ENCODE measurements at regions of chr2 and their contacts with region 1.

Region 1: GRCh38 chr2:27050281-27050995 is 1.0 kb upstream of the AGBL5 start:
- DNase-seq: peak; percentile 95
- ATAC-seq: peak; percentile 73
- H3K4me3 Mint-ChIP-seq: peak overlapping the region; percentile 90
- H3K27ac Mint-ChIP-seq: peak overlapping the region; percentile 98
- H3K4me1 Mint-ChIP-seq: peaks cover 18% of the 10 kb centered on the region
- H3K27me3 Mint-ChIP-seq: peaks cover 4% of the 10 kb centered on the region

Region 2: GRCh38 chr2:26959331-26959730 is 91.1 kb before region 1 on chr2:
- CTCF ChIA-PET with region 1: interaction called, 15 read pairs
- POLR2A ChIA-PET with region 1: no interaction called
- intact Hi-C with region 1: no loop called
- DNase-seq: no peak
- ATAC-seq: no peak
- H3K4me3 Mint-ChIP-seq: no peak overlapping the region
- H3K27ac Mint-ChIP-seq: no peak overlapping the region
- H3K4me1 Mint-ChIP-seq: no peaks in the 10 kb centered on the region
- H3K27me3 Mint-ChIP-seq: peaks cover 27% of the 10 kb centered on the region

Region 3: GRCh38 chr2:26982102-26982742 is 68.2 kb before region 1 on chr2:
- CTCF ChIA-PET with region 1: no interaction called
- POLR2A ChIA-PET with region 1: no interaction called
- intact Hi-C with region 1: no loop called
- DNase-seq: peak; percentile 42
- ATAC-seq: peak; percentile 57
- H3K4me3 Mint-ChIP-seq: no peak overlapping the region
- H3K27ac Mint-ChIP-seq: no peak overlapping the region
- H3K4me1 Mint-ChIP-seq: no peaks in the 10 kb centered on the region
- H3K27me3 Mint-ChIP-seq: no peaks in the 10 kb centered on the region

Region 4: DNA sequence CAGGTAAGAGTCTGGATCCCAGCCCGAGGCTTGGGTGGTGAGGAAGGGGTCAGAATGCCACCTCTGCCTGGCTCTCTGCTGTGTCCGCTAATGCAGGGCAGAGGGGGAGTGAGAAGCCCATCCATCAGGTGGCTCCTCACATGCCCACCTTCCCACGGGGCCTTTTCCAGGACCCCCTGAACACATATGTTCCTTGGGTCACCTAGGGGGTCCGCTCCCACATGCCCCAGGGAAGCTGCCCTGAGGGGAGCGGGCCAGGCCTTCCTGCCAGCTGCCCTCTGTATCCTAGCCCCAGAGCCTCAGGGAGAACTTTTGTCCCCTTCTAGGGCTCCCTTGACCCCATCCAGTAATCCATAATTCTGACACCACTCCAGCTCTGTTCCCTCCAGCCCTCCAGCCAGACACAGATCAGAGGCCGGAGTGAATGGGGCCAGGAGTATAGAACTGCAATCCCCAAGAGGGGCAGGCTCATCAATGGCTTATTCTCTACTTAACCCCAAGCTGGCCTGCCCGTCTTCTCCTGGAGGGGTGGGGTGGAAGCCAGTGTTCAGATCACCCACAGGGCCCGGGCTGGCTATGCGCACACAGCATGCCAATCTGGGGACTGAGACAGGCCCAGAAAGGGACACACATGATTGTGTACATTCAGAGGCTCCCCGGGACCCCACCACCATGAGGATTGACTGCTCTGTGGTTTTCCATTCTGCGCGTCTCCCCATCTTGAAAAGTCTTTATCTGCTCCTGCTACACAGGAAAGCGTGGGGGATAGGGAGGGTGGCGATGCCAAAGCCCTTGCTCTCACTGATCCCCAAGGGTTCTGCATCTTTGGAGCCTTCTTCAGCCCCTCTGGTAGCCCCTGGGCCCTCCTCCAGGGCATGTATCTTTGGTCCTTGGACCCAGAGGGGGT is 29.0 kb after region 1 on chr2:
- CTCF ChIA-PET with region 1: interaction called, 30 read pairs
- POLR2A ChIA-PET with region 1: interaction called, 6 read pairs
- intact Hi-C with region 1: loop called (anchors 1 kb)
- DNase-seq: no peak
- ATAC-seq: no peak
- H3K4me3 Mint-ChIP-seq: no peak overlapping the region
- H3K27ac Mint-ChIP-seq: peak overlapping the region; percentile 83
- H3K4me1 Mint-ChIP-seq: peaks cover 43% of the 10 kb centered on the region
- H3K27me3 Mint-ChIP-seq: no peaks in the 10 kb centered on the region

Region 5: DNA sequence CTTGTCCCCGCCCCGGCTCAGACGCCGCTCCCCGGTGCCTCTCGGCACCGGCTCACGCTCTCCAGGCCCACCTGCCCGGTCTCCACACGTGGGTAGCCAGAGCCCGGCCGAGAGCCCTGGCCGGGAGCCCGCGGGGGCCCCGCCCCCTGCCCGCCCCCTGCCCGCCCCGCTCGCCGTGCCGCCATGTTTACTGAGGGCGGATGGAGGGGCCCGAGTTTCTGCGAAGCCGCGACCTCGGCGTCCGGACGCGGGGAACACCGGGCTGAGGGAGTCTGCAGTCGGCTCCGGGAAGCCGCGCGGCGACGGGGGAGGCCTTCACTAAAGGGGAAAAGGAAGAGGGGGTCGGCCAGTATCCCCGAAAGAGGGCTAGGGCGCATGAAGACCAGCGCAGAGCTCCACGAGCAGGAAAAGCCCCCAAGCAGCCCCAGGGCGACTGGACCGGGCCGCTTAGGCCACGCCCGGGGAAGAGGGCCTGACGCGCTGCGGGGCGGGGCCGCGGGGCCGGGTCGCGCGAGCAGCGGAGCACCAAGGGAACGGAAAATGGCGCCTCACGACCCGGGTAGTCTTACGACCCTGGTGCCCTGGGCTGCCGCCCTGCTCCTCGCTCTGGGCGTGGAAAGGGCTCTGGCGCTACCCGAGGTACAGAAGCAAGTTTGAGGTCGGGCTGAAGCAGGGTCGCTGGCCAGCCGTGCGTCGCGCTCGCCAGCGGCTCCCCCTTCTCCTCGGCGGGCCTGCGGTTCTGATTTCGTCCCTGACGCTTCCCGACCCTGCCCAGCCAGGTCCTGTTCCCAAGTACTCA is 161.6 kb after region 1 on chr2 and contains the starts of genes ATRAID and SLC5A6:
- CTCF ChIA-PET with region 1: no interaction called
- POLR2A ChIA-PET with region 1: no interaction called
- intact Hi-C with region 1: loop called in 1 of 2 experiments (anchors 1 kb)
- DNase-seq: peak; percentile 93
- ATAC-seq: peak; percentile 90
- H3K4me3 Mint-ChIP-seq: peak within 1 kb of the TSS; percentile 99
- H3K27ac Mint-ChIP-seq: peak within 1 kb of the TSS; percentile 100
- H3K4me1 Mint-ChIP-seq: peaks cover 34% of the 10 kb centered on the region
- H3K27me3 Mint-ChIP-seq: no peaks in the 10 kb centered on the region
- total RNA-seq, gene ATRAID: 69.9 to 83.4 TPM
- total RNA-seq, gene SLC5A6: 27.3 to 34.9 TPM

Region 6: DNA sequence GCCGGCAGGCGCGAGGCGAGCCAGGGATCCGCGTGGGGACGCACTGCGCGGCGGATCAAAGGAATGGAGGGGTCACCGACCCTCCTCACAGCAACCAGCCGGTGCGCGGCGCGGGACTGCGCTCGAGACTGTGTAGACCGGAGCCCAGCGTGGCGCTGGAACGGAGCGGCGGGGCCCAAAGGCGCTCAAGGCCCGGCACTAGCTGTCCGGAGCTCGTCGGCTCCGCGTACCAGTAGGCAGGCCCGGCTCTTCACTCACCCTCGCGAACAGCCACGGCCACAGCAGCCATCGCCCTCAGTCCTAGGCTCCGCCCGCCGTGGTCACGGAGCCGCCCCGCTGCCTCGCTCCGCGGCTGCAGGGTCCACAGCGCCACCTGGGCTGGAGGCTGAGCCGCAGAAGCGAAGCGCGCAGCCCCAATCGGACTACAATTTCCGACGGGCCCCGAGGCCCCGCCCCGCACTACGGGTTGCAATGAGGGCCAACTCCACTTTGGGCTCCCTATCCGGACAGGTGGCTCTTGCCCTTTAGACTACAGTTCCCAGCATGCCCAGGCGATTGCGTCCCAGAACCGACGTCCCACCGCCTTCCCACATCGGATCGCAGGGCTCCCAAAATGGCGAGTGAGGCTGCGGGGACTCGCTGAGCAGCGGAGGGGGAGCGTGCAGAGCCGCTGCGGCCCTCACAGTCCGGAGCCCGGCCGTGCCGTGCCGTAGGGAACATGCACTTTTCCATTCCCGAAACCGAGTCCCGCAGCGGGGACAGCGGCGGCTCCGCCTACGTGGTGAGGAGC is 319.8 kb after region 1 on chr2 and contains the starts of genes EIF2B4 and SNX17:
- CTCF ChIA-PET with region 1: no interaction called
- POLR2A ChIA-PET with region 1: no interaction called
- intact Hi-C with region 1: loop called in 1 of 2 experiments (anchors 1 kb)
- DNase-seq: peak; percentile 99
- ATAC-seq: peak; percentile 95
- H3K4me3 Mint-ChIP-seq: peak within 1 kb of the TSS; percentile 90
- H3K27ac Mint-ChIP-seq: peak within 1 kb of the TSS; percentile 95
- H3K4me1 Mint-ChIP-seq: peaks cover 39% of the 10 kb centered on the region
- H3K27me3 Mint-ChIP-seq: no peaks in the 10 kb centered on the region
- total RNA-seq, gene EIF2B4: 31.0 to 39.2 TPM
- total RNA-seq, gene SNX17: 63.9 to 82.1 TPM